PC-9 (cell line): ENCODE measurements at regions of chr12 and their contacts with region 1.

Region 1: DNA sequence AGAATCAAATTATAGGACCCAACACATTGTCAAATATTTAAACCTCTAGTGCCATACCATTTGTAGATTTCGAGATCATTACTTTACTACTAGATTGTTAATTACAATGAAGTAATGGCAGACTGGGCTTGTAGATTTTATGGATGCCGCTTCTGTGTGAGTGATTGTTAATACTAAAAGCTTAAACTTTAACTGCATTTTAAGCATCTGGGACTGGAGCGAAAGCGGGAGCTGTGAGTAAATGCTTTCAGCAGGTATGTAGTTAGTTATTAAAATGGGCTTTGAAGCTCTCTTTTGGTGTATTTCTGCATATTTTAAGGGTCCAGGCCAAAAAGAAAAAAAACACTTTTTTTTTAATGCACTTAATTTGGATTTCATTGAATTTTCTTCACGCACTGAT is 519.3 kb downstream of the MED13L start:
- DNase-seq: no peak
- H3K4me3 ChIP-seq: no peak overlapping the region
- H3K27ac ChIP-seq: no peak overlapping the region
- H3K4me1 ChIP-seq: no peaks in the 10 kb centered on the region
- H3K27me3 ChIP-seq: peaks cover 65% of the 10 kb centered on the region
- CTCF ChIP-seq: no peak

Region 2: GRCh38 chr12:117441751-117442150 is 1683.6 kb after region 1 on chr12:
- CTCF ChIA-PET with region 1: interaction called, 14 read pairs
- POLR2A ChIA-PET with region 1: no interaction called
- intact Hi-C with region 1: no loop called
- DNase-seq: no peak
- H3K4me3 ChIP-seq: no peak overlapping the region
- H3K27ac ChIP-seq: no peak overlapping the region
- H3K4me1 ChIP-seq: no peaks in the 10 kb centered on the region
- H3K27me3 ChIP-seq: peaks cover 82% of the 10 kb centered on the region
- CTCF ChIP-seq: no peak